Left colon (tissue), 2 donors: ENCODE measurements at regions of chr18 and their contacts with region 1.

Region 1: GRCh38 chr18:21012308-21012707 is 99.3 kb downstream of the ROCK1 start:
- DNase-seq: no peak
- ATAC-seq: no peak

Region 2: GRCh38 chr18:21179590-21180220 is 167.4 kb after region 1 on chr18:
- intact Hi-C with region 1: loop called in 1 of 2 experiments (anchors 10 kb)
- DNase-seq: peak in 1 of 2 donors; percentile 39
- ATAC-seq: peak; percentile 59

Region 3: GRCh38 chr18:21315741-21316187 is 303.5 kb after region 1 on chr18:
- intact Hi-C with region 1: no loop called
- DNase-seq: no peak
- ATAC-seq: no peak